ENCODE measurements at regions of chr16 and their contacts with region 1.

Region 1: DNA sequence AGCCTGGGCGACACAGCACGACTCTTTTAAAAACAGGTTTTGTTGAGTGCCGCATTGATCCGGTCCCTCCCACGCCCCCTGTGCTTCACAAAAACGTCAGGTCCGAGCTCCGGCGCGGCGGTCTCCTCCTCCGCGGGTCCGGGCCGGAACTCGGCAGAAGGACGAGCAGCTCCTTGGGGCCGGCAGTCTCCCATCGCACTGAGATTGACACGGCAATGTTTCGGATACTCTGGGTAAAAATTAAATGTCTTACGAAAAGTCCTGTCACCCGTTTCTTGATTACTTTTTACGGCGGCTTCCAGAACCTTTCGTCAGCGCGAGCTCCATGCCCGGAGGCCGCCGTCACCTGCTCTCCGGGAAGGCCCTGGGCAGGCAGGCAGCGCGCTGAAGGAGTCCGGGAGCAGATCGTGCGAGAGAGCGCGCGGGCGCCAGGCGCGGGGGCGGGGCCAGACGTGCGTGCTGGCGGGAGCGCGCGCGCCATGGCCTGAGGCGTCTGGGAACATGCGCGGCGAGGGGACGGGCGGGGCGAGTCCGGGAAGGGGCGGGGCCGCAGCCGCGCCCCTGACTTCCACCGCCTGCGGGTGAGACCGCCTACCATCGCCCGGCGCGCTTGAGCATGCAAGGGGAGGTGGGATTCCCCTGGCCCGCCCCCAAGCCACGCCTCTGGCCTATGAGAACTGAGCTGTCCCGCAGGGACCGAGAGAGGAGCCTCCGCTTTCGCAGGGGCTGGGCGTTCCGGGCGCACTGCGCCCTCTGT is 11.7 kb upstream of the SRL start:
- DNase-seq: peak; percentile 100
- H3K4me3 ChIP-seq: peak overlapping the region; percentile 47 to 67 (median 52)
- H3K27ac ChIP-seq: peak overlapping the region; percentile 86 to 97 (median 90)
- H3K4me1 ChIP-seq: peaks cover 0 to 10% (median 3%) of the 10 kb centered on the region in 4 donors
- H3K27me3 ChIP-seq: no peaks in the 10 kb centered on the region
- CTCF ChIP-seq: no peak
- EP300 ChIP-seq: peak in 1 of 4 donors; percentile 18
- POLR2A ChIP-seq: peak; percentile 49 to 61

Region 2: GRCh38 chr16:3934491-3935181 is 318.9 kb before region 1 on chr16:
- intact Hi-C with region 1: no loop called
- DNase-seq: peak; percentile 44
- H3K4me3 ChIP-seq: no peak overlapping the region
- H3K27ac ChIP-seq: no peak overlapping the region
- H3K4me1 ChIP-seq: peaks cover 0 to 13% (median 7%) of the 10 kb centered on the region in 4 donors
- H3K27me3 ChIP-seq: no peaks in the 10 kb centered on the region
- CTCF ChIP-seq: no peak
- EP300 ChIP-seq: no peak
- POLR2A ChIP-seq: no peak

Region 3: GRCh38 chr16:3983081-3983520 is 270.5 kb before region 1 on chr16:
- intact Hi-C with region 1: loop called (anchors 2 kb)
- DNase-seq: peak; percentile 85
- H3K4me3 ChIP-seq: no peak overlapping the region
- H3K27ac ChIP-seq: no peak overlapping the region
- H3K4me1 ChIP-seq: peaks cover 0 to 21% (median 18%) of the 10 kb centered on the region in 4 donors
- H3K27me3 ChIP-seq: no peaks in the 10 kb centered on the region
- CTCF ChIP-seq: peak; percentile 53 to 73 (median 66)
- EP300 ChIP-seq: no peak
- POLR2A ChIP-seq: no peak

Region 4: GRCh38 chr16:4183237-4184036 is 70.1 kb before region 1 on chr16:
- intact Hi-C with region 1: loop called (anchors 2 kb)
- DNase-seq: peak; percentile 95
- H3K4me3 ChIP-seq: peak overlapping the region; percentile 59 to 80 (median 62)
- H3K27ac ChIP-seq: peak overlapping the region; percentile 93 to 99 (median 94)
- H3K4me1 ChIP-seq: peaks cover 0 to 8% (median 7%) of the 10 kb centered on the region in 4 donors
- H3K27me3 ChIP-seq: no peaks in the 10 kb centered on the region
- CTCF ChIP-seq: no peak
- EP300 ChIP-seq: peak in 1 of 4 donors; percentile 38
- POLR2A ChIP-seq: no peak

Region 5: GRCh38 chr16:4200000-4200780 is 53.4 kb before region 1 on chr16:
- intact Hi-C with region 1: loop called (anchors 1 kb)
- DNase-seq: peak; percentile 85
- H3K4me3 ChIP-seq: no peak overlapping the region
- H3K27ac ChIP-seq: no peak overlapping the region
- H3K4me1 ChIP-seq: peaks cover 0 to 7% (median 2%) of the 10 kb centered on the region in 4 donors
- H3K27me3 ChIP-seq: no peaks in the 10 kb centered on the region
- CTCF ChIP-seq: peak; percentile 63 to 79 (median 69)
- EP300 ChIP-seq: no peak
- POLR2A ChIP-seq: no peak